Right ventricle myocardium inferior (tissue), 1 donor: ENCODE measurements at regions of chr11 and their contacts with region 1.

Region 1: GRCh38 chr11:74449369-74449931 is 17.9 kb downstream of the KCNE3 start:
- DNase-seq: no peak
- ATAC-seq: peak; percentile 77

Region 2: DNA sequence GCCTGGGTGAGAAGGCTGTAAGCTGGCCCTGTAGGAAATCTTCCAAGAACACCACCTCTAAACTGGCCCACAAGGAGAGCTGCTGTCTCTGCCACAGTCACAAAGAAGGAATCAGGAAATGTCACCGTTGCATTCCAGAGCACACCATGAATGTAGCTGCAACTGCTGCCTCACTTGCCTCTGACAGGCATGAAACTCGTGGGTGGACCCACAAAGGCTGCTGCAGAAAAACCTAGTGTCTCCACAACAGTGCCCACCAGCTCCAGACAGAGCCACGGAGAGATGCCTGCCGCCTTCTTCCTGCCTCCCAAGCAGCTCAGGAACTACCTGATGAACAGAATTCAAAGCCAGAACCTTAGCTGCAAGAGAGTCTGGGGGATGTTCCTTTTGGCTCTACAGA is 488.1 kb before region 1 on chr11:
- intact Hi-C with region 1: loop called (anchors 5 kb)
- DNase-seq: no peak
- ATAC-seq: no peak

Region 3: DNA sequence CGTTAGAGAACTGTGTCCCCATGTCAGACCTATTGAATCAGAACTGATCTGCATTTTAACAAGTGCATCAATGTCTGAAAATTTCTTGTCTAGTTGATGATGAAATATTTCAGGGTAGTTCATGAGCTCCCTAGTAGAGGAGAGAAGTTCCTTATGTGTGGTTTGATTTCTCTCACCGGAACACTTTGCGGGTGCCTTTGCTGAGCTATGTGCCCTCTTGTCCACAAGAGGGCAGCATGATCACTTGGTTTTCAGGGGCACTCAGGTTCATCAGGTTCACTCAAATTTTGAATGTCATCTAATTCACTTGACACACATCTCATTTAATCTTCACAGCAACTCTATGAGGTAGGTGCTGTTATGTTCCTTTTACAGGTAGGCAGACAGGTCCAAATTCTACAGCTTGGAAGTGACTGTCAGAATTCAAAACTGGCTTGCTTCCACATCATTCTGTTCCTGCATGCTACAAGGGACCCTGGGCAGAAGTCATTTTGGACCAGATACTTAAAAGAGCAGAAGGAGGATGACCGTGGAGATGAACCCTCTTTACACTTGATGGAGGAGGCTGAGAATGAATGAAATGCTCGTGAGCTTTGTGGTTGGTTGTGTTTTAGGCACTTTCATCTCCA is 193.6 kb before region 1 on chr11:
- intact Hi-C with region 1: loop called (anchors 1 kb)
- DNase-seq: no peak
- ATAC-seq: peak; percentile 50

Region 4: DNA sequence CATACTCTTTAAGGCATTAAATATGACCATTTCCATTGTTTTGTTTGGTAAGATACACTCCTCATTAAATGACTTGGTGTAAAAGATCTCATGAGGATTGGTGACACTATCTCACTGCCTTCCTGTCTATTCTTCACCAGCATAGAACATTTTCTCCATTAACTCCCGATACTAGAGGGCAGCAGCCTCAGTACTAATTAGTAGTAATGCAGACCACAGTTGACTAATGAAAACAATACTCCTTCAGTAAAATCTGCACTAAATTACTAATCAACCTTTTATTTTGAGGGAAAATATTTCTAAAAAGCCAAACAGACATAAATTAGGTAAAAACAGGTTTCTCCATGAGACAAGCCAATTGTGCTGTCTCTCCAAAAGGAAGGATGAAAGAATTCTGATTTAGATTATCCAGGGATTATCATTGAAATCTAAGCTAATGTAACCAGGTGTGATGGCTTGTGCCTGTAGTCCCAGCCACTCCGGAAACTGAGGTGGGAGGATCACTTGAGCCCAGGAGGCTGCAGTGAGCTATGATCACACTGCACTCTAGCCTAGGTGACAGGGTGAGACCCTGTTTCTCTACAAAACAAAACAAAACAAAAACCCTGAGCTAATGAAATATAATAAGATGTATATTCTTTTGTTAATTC is 60.6 kb before region 1 on chr11:
- intact Hi-C with region 1: loop called (anchors 2 kb)
- DNase-seq: no peak
- ATAC-seq: no peak

Region 5: GRCh38 chr11:74434528-74434927 is 14.9 kb before region 1 on chr11:
- intact Hi-C with region 1: no loop called
- DNase-seq: no peak
- ATAC-seq: no peak

Region 6: GRCh38 chr11:74506823-74507222 is 57.4 kb after region 1 on chr11:
- intact Hi-C with region 1: no loop called
- DNase-seq: no peak
- ATAC-seq: no peak

Region 7: DNA sequence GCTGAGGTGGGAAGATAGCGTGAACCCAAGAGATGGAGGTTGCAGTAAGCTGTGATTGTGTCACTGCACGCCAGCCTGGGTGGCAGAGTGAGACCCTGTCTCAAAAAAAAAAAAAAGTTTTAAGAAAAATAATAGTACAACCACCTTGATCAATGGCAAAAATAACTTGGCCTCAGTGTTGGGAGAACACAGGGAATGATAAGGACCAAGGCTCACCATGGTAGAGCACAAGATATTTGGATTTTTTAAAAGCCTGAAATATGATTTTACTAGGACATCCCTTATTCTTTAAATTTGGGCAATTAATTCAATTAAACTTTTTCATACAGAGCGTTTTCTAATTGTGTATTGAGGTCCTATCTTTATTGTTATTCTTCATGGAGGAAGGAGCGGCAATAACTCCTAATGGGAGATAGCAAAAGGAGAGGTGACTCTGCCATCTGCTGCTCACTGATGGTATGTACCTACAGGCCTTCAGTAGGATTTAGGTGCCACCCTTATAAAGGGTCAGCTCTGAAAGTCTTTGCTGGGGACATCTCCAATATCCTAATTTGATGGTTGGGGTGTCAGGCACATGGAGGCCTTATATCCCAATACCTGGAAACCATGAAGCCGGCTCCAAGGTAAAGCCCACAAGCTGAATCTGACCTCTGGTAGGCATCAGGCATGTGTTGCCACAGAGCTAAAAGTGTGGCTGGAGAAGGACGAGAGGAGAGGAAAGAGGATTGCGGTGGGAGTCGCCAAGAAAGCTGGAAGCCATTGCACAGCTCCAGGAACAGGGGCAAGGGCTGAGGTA is 121.0 kb after region 1 on chr11:
- intact Hi-C with region 1: loop called (anchors 1 kb)
- DNase-seq: no peak
- ATAC-seq: peak; percentile 56

Region 8: GRCh38 chr11:74650498-74650897 is 201.0 kb after region 1 on chr11:
- intact Hi-C with region 1: no loop called
- DNase-seq: peak; percentile 74
- ATAC-seq: peak; percentile 93